ENCODE measurements at regions of chr9 and their contacts with region 1.

Region 1: DNA sequence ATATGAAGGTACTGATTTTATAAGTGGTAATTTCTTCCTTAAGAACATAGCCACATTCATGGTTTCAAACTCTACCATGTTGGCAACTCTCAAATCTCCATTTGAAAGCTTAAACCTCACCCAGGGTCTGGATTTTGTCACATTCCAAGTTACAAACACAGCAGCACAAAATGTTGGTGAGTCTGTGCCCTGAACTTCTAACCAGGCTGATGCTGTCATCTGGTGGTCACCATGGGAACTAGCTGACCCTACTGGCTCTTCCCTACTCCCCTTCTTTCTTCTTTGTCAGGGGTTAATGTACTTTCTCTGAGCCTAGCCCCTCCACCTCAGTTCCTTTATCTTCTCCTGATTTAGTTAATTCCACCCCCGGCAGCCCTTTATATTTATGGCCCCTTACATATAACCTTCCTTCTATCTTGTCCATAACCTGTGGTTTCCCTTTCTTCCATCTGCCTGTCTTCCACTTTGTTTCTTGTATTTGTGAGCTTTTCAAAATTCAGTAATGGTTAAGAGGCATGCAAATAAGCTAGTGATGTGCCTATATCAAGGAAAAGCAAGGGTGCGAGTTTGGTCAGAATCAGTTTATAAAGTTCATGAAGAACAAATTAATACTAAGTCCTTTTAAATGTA is 35.9 kb downstream of the TGFBR1 start:
- DNase-seq: no peak
- ATAC-seq: peak; percentile 86
- H3K4me3 Mint-ChIP-seq: no peak overlapping the region
- H3K27ac Mint-ChIP-seq: peak overlapping the region; percentile 9
- H3K4me1 Mint-ChIP-seq: peaks cover 27% of the 10 kb centered on the region
- H3K27me3 Mint-ChIP-seq: no peaks in the 10 kb centered on the region
- CTCF ChIP-seq: peak; percentile 24

Region 2: DNA sequence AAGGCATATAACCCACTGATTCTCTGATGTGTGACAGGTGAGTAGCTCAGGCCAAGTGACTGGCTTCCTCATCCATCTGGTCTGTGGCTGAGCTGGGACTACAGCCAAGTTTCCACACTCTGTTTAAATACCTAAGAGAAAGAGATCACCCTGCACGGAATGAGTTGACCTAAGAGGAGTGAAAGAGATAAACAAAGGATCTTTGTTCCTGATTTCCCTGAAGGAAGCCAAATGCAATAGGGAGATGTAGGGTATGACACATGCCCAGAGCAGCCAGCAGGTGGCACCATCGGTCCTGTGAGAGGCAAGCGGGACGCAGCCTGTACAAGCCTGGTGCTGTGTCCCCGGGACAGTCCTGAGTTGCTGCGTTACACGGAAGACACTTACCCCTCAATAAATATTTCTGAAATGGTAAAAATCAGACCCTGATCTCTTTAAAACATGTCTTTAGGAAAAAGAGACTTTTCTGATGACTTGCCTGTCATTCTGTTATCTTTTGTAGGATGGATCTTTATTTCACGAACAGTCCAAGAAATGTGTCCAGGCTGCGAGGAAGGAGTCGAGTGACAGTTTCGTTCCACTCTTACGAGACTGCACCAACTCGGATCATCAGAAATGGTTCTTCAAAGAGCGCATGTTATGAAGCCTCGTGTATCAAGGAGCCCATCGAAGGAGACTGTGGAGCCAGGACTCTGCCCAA is 292.2 kb before region 1 on chr9:
- CTCF ChIA-PET with region 1: interaction called, 65 read pairs
- POLR2A ChIA-PET with region 1: no interaction called
- intact Hi-C with region 1: loop called (anchors 1 kb)
- DNase-seq: peak; percentile 59
- ATAC-seq: peak; percentile 97
- H3K4me3 Mint-ChIP-seq: no peak overlapping the region
- H3K27ac Mint-ChIP-seq: no peak overlapping the region
- H3K4me1 Mint-ChIP-seq: no peaks in the 10 kb centered on the region
- H3K27me3 Mint-ChIP-seq: no peaks in the 10 kb centered on the region
- CTCF ChIP-seq: peak; percentile 59

Region 3: GRCh38 chr9:98989036-98990000 is 151.5 kb before region 1 on chr9:
- CTCF ChIA-PET with region 1: interaction called, 264 read pairs
- POLR2A ChIA-PET with region 1: no interaction called
- intact Hi-C with region 1: no loop called
- DNase-seq: no peak
- ATAC-seq: no peak
- H3K4me3 Mint-ChIP-seq: no peak overlapping the region
- H3K27ac Mint-ChIP-seq: no peak overlapping the region
- H3K4me1 Mint-ChIP-seq: peaks cover 21% of the 10 kb centered on the region
- H3K27me3 Mint-ChIP-seq: no peaks in the 10 kb centered on the region
- CTCF ChIP-seq: no peak

Region 4: GRCh38 chr9:99004717-99005460 is 135.9 kb before region 1 on chr9:
- CTCF ChIA-PET with region 1: interaction called, 264 read pairs
- POLR2A ChIA-PET with region 1: interaction called, 4 read pairs
- intact Hi-C with region 1: loop called (anchors 1 kb)
- DNase-seq: no peak
- ATAC-seq: no peak
- H3K4me3 Mint-ChIP-seq: no peak overlapping the region
- H3K27ac Mint-ChIP-seq: no peak overlapping the region
- H3K4me1 Mint-ChIP-seq: peaks cover 7% of the 10 kb centered on the region
- H3K27me3 Mint-ChIP-seq: no peaks in the 10 kb centered on the region
- CTCF ChIP-seq: no peak

Region 5: DNA sequence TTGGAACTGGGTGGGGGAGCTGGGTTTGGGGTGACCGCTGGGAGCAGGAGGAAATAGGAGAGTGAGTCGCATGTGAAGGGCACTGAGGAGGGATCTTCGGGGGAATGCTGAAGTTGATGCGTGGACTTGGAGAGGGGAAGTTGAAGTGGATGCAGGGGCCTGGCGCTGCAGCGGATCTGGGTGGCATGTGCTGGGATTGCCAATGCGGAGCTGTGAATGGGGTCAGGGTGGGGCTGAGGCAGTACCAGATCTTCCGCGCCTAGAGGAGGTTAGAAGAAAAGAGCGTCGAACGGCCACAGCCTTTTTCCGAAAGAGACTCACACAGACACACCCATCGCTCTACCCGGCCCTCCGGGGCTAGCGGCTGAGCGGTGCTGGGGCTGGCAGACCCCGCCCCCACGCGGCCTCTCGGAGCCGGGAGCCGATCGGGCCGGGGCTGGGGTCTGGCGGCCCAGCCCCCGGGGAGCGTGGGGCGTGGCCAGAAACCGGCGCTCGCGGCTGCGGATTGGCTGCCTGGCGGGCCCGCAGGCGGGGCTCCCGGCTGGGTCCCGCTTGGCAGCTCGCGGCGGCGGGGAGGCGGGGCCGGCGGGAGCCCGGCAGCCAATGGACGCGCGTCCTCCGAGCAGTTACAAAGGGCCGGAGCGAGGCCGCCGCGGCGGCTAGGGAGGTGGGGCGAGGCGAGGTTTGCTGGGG is 36.2 kb before region 1 on chr9 and contains the start of gene TGFBR1:
- CTCF ChIA-PET with region 1: interaction called, 15 read pairs
- POLR2A ChIA-PET with region 1: interaction called, 12 read pairs
- intact Hi-C with region 1: loop called (anchors 1 kb)
- DNase-seq: peak; percentile 98
- ATAC-seq: peak; percentile 85
- H3K4me3 Mint-ChIP-seq: peak within 1 kb of the TSS; percentile 89
- H3K27ac Mint-ChIP-seq: peak within 1 kb of the TSS; percentile 83
- H3K4me1 Mint-ChIP-seq: peaks cover 50% of the 10 kb centered on the region
- H3K27me3 Mint-ChIP-seq: no peaks in the 10 kb centered on the region
- CTCF ChIP-seq: no peak
- total RNA-seq, gene TGFBR1: 53.5 and 65.3 TPM in 2 replicates

Region 6: GRCh38 chr9:100269656-100270055 is 1128.9 kb after region 1 on chr9:
- CTCF ChIA-PET with region 1: no interaction called
- POLR2A ChIA-PET with region 1: no interaction called
- intact Hi-C with region 1: no loop called
- DNase-seq: no peak
- ATAC-seq: no peak
- H3K4me3 Mint-ChIP-seq: no peak overlapping the region
- H3K27ac Mint-ChIP-seq: no peak overlapping the region
- H3K4me1 Mint-ChIP-seq: no peaks in the 10 kb centered on the region
- H3K27me3 Mint-ChIP-seq: no peaks in the 10 kb centered on the region
- CTCF ChIP-seq: no peak